CD14-positive monocyte (primary cell): ENCODE measurements at regions of chr5 and their contacts with region 1.

Region 1: GRCh38 chr5:181223058-181223728 is at the start of gene TRIM41:
- DNase-seq: peak; percentile 99
- H3K4me3 ChIP-seq: peak within 1 kb of the TSS; percentile 67 to 92 (median 89)
- H3K4me3 Mint-ChIP-seq: peak within 1 kb of the TSS; percentile 94 to 95
- H3K27ac ChIP-seq: peak within 1 kb of the TSS; percentile 91 to 92
- H3K27ac Mint-ChIP-seq: peak within 1 kb of the TSS; percentile 95 to 99 (median 97)
- H3K4me1 ChIP-seq: peaks cover 35 to 45% of the 10 kb centered on the region in 2 donors
- H3K4me1 Mint-ChIP-seq: peaks cover 41% of the 10 kb centered on the region
- H3K27me3 ChIP-seq: peaks cover 0 to 11% of the 10 kb centered on the region in 2 donors
- H3K27me3 Mint-ChIP-seq: peaks cover 7 to 12% (median 9%) of the 10 kb centered on the region in 3 donors
- CTCF ChIP-seq: no peak
- polyA plus RNA-seq, gene TRIM41: 0.12 to 26.4 (median 0.24) TPM

Region 2: DNA sequence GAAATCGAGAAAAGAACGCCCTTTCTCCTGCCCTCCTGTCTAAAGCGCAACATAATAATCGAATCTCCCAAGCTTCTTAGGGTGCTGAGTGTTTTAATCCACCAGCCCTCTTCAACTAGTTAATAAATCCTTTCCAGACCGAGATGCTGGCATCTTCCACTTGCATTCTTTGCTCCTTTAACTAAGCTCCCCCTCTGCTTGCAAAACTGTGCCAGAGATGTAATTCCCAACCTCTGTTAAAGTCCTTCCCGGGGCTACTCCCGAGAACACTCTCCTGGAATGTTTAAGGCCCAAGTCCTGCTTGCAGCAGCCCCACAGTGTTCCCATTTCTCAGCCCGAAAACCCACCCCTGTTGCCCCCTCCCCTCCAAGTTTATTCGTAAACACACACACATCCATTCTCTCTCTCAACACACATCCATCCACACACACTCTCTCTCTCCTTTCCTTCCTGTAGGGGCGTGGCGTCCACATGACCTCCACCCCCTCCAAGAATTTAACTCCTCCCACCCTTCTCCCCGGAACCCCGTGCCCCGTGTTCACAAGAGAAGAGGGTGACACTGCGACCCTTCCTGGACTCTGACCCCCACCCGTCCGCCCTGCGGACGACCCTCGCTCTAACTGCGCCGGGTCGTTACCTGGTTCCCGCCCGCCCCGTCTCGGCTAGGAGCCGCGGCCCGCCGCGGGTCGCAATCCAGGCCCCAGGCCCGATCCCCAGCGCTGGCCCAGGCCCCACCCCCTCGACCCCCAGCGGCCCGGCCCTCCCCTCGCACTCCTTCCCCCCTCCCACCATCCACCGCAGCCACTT is 413.6 kb before region 1 on chr5:
- intact Hi-C with region 1: loop called (anchors 10 kb)
- DNase-seq: peak; percentile 66 to 85 (median 80)
- H3K4me3 ChIP-seq: peak overlapping the region; percentile 52 to 98 (median 58)
- H3K4me3 Mint-ChIP-seq: peak overlapping the region; percentile 80 to 93
- H3K27ac ChIP-seq: peak overlapping the region; percentile 95 to 98
- H3K27ac Mint-ChIP-seq: peak overlapping the region; percentile 96 to 100 (median 99)
- H3K4me1 ChIP-seq: peaks cover 85 to 94% of the 10 kb centered on the region in 2 donors
- H3K4me1 Mint-ChIP-seq: peaks cover 82% of the 10 kb centered on the region
- H3K27me3 ChIP-seq: no peaks in the 10 kb centered on the region
- H3K27me3 Mint-ChIP-seq: peaks cover 0 to 2% (median 0%) of the 10 kb centered on the region in 3 donors
- CTCF ChIP-seq: no peak

Region 3: DNA sequence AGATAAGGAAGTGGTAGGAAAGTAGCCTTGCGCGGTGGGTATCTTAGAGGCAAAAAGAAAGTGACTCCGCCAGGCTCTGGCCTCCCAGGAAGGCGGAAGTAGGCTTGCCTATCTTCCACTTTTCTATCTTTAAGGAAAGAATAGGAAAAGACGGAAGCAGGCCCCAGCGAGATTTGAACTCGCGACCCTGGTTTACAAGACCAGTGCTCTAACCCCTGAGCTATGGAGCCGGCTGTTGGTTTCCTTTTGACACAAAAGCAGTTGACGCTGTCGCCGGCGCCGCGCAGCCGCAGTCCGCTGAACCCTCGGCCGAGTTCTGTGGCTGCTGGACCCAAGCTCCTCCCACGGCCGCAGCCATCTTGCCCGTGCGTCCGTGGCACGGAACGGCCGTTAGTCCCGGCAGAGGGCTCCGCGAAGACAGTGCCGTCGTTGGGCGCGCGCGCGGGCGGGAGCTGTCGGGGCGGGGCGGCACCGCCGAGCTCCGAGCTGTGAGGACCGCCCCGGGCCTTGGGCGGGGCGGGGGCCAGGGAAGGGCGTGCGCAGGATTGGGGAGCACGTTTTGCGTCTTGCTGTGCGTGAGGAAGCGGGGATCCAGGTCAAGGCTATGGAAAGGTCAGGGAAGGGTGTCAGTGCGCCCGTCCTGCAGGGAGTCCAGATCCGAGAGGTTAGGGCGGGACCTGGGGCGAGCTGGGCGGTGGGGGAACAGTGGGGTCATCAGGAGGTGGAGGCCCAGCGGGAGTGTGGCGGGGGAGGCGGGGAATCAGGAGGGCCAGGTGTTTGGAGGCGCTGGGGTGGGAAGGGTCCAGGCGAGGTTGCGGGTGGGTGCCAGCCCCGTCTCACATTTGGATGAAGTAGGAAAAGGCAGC is 31.4 kb before region 1 on chr5:
- intact Hi-C with region 1: loop called in 1 of 2 experiments (anchors 1 kb)
- DNase-seq: peak; percentile 95 to 97 (median 96)
- H3K4me3 ChIP-seq: peak overlapping the region; percentile 64 to 96 (median 95)
- H3K4me3 Mint-ChIP-seq: peak overlapping the region; percentile 98
- H3K27ac ChIP-seq: peak overlapping the region; percentile 76 to 84
- H3K27ac Mint-ChIP-seq: peak overlapping the region; percentile 89 to 95 (median 92)
- H3K4me1 ChIP-seq: peaks cover 43 to 48% of the 10 kb centered on the region in 2 donors
- H3K4me1 Mint-ChIP-seq: peaks cover 38% of the 10 kb centered on the region
- H3K27me3 ChIP-seq: peaks cover 0 to 14% of the 10 kb centered on the region in 2 donors
- H3K27me3 Mint-ChIP-seq: peaks cover 12 to 31% (median 21%) of the 10 kb centered on the region in 3 donors
- CTCF ChIP-seq: no peak

Region 4: GRCh38 chr5:181243512-181244343 is 20.5 kb after region 1 on chr5 and contains the start of gene RACK1:
- intact Hi-C with region 1: loop called in 1 of 2 experiments (anchors 2 kb)
- DNase-seq: peak; percentile 82 to 87 (median 84)
- H3K4me3 ChIP-seq: peak within 1 kb of the TSS; percentile 93 to 96 (median 93)
- H3K4me3 Mint-ChIP-seq: peak within 1 kb of the TSS; percentile 95 to 97
- H3K27ac ChIP-seq: peak within 1 kb of the TSS; percentile 90 to 95
- H3K27ac Mint-ChIP-seq: peak within 1 kb of the TSS; percentile 97 to 99 (median 98)
- H3K4me1 ChIP-seq: peaks cover 53 to 63% of the 10 kb centered on the region in 2 donors
- H3K4me1 Mint-ChIP-seq: peaks cover 53% of the 10 kb centered on the region
- H3K27me3 ChIP-seq: no peaks in the 10 kb centered on the region
- H3K27me3 Mint-ChIP-seq: peaks cover 0 to 2% (median 0%) of the 10 kb centered on the region in 3 donors
- CTCF ChIP-seq: no peak
- polyA plus RNA-seq, gene RACK1: 1,150 to 2,356 (median 1,195) TPM

Region 5: DNA sequence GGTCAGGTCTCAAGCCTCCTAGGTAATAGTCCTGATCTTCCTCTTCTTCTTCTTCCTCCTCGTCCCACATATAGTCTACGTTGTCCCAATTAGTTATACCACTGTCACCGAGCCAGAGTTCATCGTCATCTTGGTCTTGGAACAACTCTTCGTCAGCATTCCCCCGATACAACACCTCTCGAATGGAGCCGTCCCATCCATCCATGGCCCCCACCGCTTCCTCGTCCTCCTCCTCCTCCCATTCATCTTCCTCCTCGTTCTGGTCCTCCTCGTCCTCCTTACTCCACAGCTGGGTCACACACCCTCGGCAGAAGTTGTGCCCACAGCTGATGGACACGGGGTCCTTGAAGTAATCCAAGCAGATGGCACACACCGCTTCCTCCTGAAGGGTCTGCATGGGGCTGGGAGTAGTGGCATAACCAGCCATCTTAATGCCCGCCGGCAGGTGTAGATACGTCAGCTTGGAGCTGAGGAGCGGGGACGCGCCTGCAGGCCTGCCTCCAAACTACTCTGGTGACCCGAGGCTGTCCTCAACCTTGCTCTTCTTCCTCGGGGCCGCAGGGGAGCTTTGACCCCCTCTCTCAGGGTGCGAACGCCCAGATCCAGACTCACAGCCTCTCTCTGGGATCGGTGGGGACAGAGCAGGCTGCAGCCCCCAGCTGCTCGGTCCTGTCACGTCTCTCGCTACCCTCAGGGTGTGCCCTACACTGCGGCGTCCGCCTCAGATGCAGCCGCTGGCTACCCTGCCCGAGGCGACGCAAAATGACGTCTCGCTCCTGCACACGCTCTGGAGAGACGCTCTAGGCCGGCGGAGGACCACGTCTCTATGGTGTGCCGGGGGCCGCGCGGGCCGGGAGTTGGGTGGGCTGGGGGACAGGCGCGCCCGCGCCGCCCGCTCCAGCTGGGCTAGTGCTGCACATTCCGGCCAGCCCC is 37.5 kb after region 1 on chr5 and contains the start of gene TRIM52:
- intact Hi-C with region 1: loop called (anchors 2 to 5 kb)
- DNase-seq: peak; percentile 85 to 89 (median 87)
- H3K4me3 ChIP-seq: peak within 1 kb of the TSS; percentile 80 to 97 (median 89)
- H3K4me3 Mint-ChIP-seq: peak within 1 kb of the TSS; percentile 95 to 96
- H3K27ac ChIP-seq: peak within 1 kb of the TSS; percentile 93 to 96
- H3K27ac Mint-ChIP-seq: peak within 1 kb of the TSS; percentile 93 to 99 (median 97)
- H3K4me1 ChIP-seq: peaks cover 25 to 46% of the 10 kb centered on the region in 2 donors
- H3K4me1 Mint-ChIP-seq: peaks cover 46% of the 10 kb centered on the region
- H3K27me3 ChIP-seq: no peaks in the 10 kb centered on the region
- H3K27me3 Mint-ChIP-seq: no peaks in the 10 kb centered on the region
- CTCF ChIP-seq: no peak
- polyA plus RNA-seq, gene TRIM52: 5.7 to 26.0 (median 8.5) TPM